ENCODE measurements at regions of chr12 and their contacts with region 1.

Region 1: DNA sequence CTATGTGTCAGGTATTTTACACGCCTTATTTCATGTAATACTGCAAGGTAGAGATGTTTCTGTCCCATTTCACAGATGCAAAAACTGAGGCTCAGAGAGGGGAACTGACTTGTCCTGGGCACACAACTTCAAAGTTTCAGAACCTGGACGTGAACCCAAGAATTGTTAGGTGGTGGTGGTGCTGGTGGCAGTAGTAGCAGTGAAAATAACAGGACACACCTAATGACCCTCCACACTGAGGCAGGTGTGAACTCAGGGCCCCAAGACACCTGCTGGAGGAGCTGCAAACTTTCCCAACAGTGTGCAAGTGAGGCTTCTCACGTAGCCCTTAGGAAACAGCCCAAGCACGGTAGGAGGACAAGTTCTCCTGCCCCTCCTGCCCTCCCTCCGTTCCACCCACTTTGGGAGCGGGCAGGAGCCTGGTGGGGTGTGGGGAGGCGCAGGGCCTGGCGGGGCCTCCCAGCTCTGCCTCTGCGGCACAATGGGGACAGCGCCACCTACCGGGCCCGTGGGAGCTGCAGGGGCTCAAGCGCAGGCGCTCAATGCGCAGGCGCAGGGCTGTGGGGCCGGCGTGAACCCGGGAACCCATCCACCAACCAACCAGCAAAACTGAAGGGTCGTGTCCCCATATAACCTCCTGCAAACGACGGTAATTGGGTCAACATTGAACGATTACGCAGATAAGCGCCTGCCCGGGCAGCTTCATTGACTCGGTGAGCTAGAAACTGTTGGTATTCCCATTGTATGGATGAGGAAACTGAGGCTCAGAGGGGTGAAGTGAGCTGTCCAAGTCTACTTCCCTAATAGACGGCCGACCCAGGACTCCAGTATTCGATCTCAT is 12.0 kb upstream of the TRPV4 start:
- DNase-seq: peak; percentile 90
- ATAC-seq: peak; percentile 99
- H3K4me3 Mint-ChIP-seq: peak overlapping the region; percentile 14
- H3K27ac Mint-ChIP-seq: no peak overlapping the region
- H3K4me1 Mint-ChIP-seq: peaks cover 7% of the 10 kb centered on the region
- H3K27me3 Mint-ChIP-seq: no peaks in the 10 kb centered on the region

Region 2: DNA sequence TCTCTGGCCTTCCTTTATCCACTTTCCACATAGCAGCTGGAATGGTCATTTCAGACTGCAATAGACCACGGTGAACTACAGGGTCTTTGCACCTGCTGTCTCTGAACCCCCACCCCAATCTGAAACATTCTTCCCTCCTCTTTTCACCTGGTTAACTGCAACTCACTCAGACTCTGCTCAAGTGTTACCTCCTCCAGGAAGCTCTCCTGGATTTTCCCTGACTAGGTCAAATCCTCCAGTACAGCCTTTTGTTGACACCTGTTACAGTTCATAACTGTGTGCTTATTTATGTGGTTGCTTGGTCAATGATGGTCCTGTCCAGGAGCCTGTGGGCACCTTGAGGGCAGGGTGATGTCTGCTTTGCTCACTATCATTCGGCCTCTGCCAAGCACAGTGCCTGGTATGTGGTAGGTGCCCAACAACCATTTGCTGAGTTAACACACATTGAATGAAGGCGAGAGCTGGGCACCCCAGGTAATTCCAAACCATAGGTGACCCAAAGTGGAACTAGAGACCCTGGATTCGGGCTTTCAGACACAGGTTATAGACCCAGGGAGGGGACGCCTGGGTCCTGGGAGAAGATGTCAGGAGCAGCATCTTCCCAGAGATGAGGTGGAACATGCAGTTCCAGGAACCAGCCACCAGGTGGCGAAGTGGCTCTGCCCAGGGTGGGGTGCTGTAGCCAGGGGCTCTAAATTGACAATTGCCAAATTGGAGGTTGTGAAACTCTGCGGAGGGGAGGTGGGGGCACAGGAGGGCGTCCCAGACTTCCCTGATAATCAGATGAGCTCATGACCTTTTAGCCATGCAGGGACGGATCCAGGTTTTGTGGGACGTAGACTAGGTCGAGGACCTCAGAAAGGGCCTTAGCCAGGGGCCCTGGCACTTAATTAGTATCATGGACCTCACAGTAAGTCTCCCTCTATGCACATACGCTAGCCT is 40.1 kb before region 1 on chr12:
- CTCF ChIA-PET with region 1: interaction called, 103 read pairs
- DNase-seq: peak; percentile 74
- ATAC-seq: peak; percentile 76
- H3K4me3 Mint-ChIP-seq: no peak overlapping the region
- H3K27ac Mint-ChIP-seq: no peak overlapping the region
- H3K4me1 Mint-ChIP-seq: no peaks in the 10 kb centered on the region
- H3K27me3 Mint-ChIP-seq: no peaks in the 10 kb centered on the region

Region 3: DNA sequence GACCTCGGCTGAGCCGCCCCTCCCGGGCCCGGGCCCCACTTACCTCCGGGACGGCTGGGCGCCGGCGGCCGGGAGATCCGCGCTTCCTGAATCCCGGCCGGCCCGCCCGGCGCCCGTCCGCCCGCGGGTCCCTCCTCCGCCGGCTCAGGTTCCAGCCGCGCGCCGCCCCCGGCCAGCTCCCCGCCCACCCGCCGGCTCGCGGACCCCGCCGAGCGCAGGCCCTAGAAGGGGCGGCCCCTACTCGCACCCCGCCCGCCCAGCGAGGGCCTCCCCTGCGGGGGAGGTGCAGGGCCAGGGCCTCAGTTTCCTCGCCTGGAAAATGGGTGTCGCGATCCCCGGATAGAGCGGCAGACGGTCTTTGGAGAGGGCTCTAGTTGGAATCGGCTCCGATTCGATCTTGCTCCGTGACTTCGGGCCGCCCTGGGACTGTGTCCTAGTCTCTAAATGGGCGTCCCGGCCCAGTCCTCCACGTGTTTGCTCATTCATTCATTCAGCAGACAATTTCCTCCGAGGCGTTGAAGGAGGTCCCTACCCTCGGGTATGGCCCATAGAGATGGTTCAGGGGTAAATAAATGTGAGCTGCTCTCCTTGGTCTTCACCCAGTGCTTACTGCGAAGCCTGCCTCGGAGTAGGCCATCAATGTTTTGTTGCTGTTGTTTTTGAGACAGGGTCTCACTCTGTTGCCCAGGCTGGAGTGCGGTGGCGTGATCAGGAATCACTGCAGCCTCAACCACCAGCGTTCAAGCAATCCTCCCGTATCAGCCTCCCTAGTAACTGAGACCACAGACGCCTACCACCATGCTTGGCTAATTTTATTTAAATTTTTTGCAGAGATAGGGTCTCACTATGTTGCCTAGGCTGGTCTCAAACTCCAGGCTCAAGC is 11.7 kb before region 1 on chr12 and contains the start of gene TRPV4:
- CTCF ChIA-PET with region 1: interaction called, 23 read pairs
- DNase-seq: no peak
- ATAC-seq: no peak
- H3K4me3 Mint-ChIP-seq: no peak within 1 kb of the TSS
- H3K27ac Mint-ChIP-seq: no peak within 1 kb of the TSS
- H3K4me1 Mint-ChIP-seq: peaks cover 2% of the 10 kb centered on the region
- H3K27me3 Mint-ChIP-seq: peaks cover 44% of the 10 kb centered on the region
- total RNA-seq, gene TRPV4: not detected

Region 4: GRCh38 chr12:109863847-109864712 is 18.9 kb after region 1 on chr12:
- CTCF ChIA-PET with region 1: interaction called, 32 read pairs
- DNase-seq: peak; percentile 53
- ATAC-seq: peak; percentile 81
- H3K4me3 Mint-ChIP-seq: no peak overlapping the region
- H3K27ac Mint-ChIP-seq: peak overlapping the region; percentile 79
- H3K4me1 Mint-ChIP-seq: peaks cover 27% of the 10 kb centered on the region
- H3K27me3 Mint-ChIP-seq: no peaks in the 10 kb centered on the region

Region 5: DNA sequence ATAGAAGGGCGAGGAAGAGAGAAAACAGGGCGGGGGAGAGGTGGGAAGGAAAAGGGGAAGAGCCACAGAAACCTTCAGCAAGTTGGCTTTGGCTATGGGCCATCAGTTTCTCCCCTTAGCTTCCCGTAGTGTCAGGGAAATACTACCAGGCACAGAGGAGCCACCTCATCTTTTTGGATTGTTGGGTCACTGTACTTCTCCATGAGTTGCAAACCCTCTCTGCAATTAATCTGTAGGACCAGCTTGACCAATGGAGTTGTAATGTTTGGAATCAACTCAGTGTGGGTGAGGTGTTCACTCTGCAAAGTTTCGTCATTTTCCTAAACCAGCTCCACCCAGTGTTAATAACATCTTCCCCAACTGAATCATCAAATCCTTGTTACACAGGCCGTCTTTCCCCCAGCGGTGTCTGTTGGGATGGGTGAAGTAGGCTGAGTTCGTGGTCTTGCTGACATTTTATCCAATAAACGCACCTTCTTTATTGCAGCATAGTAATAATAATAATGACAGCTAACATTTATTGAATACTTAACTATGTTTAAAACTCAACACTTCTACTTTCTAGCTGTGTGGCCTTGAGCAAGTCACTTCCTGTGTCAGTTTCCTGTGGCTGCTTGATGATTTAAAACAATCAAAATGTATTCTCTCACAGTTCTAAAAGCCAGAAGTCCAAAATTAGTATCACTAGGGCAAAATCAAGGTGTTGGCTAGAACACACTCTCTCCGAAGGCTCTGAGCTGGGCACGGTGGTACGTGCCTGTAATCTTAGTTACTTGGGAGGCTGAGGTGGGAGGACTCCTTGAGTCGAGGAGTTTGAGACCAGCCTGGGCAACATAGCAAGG is 43.2 kb after region 1 on chr12:
- CTCF ChIA-PET with region 1: interaction called, 21 read pairs
- DNase-seq: peak; percentile 62
- ATAC-seq: peak; percentile 79
- H3K4me3 Mint-ChIP-seq: peak overlapping the region; percentile 46
- H3K27ac Mint-ChIP-seq: peak overlapping the region; percentile 99
- H3K4me1 Mint-ChIP-seq: peaks cover 43% of the 10 kb centered on the region
- H3K27me3 Mint-ChIP-seq: no peaks in the 10 kb centered on the region

Region 6: DNA sequence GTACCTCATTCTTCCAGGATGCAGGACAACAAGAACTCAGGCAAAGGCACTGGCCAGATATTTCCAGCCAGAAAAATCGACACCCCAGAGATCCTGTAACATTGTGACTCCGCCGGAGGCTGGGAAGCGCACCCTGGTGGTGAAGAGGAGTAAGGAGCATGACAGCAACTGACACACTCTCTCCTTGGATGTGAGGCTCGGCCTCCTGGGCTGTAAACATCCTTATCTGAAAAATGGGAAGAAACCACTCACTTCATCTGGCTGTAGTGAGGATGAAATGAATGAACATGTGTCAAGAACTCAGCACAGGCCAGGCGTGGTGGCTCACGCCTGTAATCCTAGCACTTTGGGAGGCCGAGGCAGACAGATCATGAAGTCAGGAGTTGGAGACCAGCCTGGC is 82.4 kb after region 1 on chr12:
- CTCF ChIA-PET with region 1: interaction called, 11 read pairs
- DNase-seq: peak; percentile 48
- ATAC-seq: peak; percentile 65
- H3K4me3 Mint-ChIP-seq: no peak overlapping the region
- H3K27ac Mint-ChIP-seq: peak overlapping the region; percentile 13
- H3K4me1 Mint-ChIP-seq: no peaks in the 10 kb centered on the region
- H3K27me3 Mint-ChIP-seq: no peaks in the 10 kb centered on the region

Region 7: DNA sequence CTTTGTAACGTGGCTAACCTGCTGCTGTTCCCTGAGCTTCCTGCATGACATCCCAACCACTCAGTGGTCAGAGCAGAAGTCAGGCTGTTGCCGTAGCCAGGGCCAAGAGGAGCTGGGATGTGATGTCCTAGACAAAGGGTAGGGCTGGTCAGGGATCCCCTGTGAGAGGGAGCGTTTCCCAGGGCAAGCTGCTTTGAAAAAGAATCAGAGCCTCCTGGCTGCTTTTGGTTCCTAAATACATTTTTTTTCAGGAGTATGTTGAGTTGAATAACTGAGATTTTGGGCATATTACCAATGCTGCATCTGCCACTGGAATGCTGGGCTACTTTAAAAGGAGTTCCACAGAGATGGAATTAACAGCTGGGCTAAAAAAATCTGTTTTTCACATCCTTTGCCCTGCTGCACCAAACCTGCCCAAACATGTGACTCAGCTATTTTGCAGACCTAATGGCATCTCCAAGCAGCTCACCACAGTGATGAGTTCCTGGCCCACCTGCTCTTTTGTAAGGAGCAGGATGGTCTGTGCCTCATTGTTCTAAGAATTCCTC is 177.9 kb after region 1 on chr12:
- CTCF ChIA-PET with region 1: no interaction called
- DNase-seq: no peak
- ATAC-seq: no peak
- H3K4me3 Mint-ChIP-seq: no peak overlapping the region
- H3K27ac Mint-ChIP-seq: no peak overlapping the region
- H3K4me1 Mint-ChIP-seq: peaks cover 20% of the 10 kb centered on the region
- H3K27me3 Mint-ChIP-seq: no peaks in the 10 kb centered on the region